Mammary epithelial cell (primary cell): ENCODE measurements at regions of chr9 and their contacts with region 1.

Region 1: DNA sequence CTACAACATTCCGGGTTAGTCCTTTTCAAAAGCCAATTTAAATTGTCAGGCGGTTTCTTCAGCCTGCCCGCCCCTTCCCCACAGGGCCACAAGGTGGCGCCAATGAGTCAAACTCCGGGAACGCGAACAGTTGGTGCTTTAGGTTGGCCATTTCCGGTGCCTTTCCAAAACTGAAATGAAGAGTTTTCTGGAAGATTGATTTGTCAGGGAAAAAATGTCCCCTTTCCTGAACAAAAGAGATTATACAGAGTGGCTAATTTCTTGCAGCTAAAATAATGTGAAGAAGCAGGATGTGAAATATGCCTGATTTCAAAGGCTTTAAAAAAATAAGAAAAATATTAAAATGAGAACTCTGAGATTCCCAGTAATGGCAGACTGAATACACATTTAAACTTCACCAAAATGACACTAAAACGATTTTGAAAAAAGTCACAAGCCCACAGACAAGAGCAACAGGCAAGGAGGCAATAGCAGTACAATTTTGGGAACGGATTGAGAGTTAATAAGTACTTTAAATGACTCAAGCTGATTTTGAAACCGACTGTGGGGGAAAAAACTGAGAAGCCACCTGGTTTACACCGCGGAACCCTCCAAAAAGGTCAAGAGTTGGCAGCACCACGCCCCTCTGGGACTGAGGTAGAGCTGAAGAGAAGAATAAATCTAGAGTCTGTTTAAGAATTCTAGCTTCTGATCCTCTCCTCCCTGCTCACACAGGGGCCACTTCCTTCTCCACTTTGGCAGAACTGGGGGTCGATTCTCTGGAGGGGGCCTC is 45.7 kb downstream of the SLC46A2 start:
- DNase-seq: peak; percentile 54
- H3K4me3 ChIP-seq: no peak overlapping the region
- H3K27ac ChIP-seq: no peak overlapping the region
- H3K4me1 ChIP-seq: peaks cover 4% of the 10 kb centered on the region
- H3K27me3 ChIP-seq: no peaks in the 10 kb centered on the region
- CTCF ChIP-seq: peak; percentile 96 to 99

Region 2: DNA sequence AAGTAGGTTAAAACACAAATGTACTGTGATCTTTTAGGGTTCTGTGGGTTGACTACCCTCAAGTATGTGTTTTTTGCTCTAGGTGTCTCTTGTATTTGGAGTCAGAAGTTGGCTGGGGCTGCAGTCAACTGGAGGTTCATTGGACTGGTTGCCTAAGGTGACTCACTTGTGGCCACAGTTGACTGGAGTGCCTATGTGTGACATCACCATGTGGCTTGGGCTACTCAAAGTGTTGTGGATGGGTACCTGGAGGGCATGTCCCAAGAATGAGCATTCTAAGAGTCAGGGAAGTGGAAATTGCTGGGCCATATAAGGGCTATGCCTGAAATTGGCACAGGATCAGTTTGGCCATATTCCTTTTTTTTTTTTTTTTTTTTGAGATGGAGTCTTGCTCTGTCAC is 67.0 kb before region 1 on chr9:
- CTCF ChIA-PET with region 1: no interaction called
- dilution Hi-C with region 1: no loop called
- in situ Hi-C with region 1: no loop called
- intact Hi-C with region 1: loop called (anchors 2 kb)
- DNase-seq: peak; percentile 66
- H3K4me3 ChIP-seq: no peak overlapping the region
- H3K27ac ChIP-seq: no peak overlapping the region
- H3K4me1 ChIP-seq: peaks cover 5% of the 10 kb centered on the region
- H3K27me3 ChIP-seq: no peaks in the 10 kb centered on the region
- CTCF ChIP-seq: no peak

Region 3: DNA sequence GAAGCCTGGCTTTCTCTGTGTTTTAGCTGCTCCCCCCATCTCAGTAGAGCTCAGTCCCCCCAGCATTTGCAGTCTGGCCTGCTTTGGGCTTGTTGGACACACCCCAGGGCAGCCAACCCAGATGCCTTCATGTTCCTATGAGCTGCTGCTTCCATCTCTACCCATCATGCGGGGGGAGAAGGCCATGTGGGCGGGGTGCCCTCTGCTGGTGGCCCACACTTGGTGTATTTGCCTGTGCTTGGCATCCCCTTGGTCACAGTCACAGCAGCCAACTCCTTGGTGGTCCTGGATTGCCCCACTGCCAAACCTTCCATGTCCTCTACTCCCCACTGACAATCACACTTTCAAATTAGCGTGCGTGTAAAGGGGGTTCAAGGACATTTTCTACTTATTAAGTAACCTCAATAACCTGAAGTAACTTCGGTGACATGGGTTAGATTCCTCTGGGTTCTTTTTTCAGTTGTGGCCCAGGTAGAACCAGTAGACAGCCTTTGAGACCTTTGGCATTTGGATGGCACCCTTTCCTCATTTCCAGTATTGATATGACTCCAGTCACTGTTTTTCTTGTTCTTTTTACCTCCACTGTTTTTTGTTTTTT is 51.6 kb before region 1 on chr9:
- CTCF ChIA-PET with region 1: no interaction called
- dilution Hi-C with region 1: no loop called
- in situ Hi-C with region 1: no loop called
- intact Hi-C with region 1: no loop called
- DNase-seq: peak; percentile 43
- H3K4me3 ChIP-seq: no peak overlapping the region
- H3K27ac ChIP-seq: no peak overlapping the region
- H3K4me1 ChIP-seq: no peaks in the 10 kb centered on the region
- H3K27me3 ChIP-seq: no peaks in the 10 kb centered on the region
- CTCF ChIP-seq: peak; percentile 83 to 90

Region 4: DNA sequence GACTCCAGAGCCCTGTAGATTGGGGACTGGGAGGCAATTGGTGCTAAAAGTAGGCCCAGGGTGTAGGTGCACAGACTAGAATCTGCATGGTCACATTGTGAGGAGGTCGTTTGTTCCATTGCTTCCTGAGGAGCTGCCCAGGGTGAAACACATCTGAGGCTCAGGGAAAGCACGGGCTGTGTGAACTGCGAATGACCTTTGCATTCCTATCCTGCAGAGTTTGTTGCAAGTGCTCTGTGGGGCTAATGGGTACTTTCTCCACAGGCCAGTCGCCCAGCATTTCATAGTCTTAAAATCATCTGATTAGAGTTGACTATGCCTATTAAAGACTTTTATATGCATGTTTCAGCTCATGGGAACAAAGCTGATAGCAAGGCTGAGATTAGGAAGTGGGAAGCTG is 60.1 kb after region 1 on chr9:
- CTCF ChIA-PET with region 1: interaction called, 5 read pairs
- dilution Hi-C with region 1: loop called (anchors 10 kb)
- in situ Hi-C with region 1: loop called in 1 of 2 experiments (anchors 5 kb)
- intact Hi-C with region 1: loop called (anchors 1 kb)
- DNase-seq: no peak
- H3K4me3 ChIP-seq: no peak overlapping the region
- H3K27ac ChIP-seq: no peak overlapping the region
- H3K4me1 ChIP-seq: no peaks in the 10 kb centered on the region
- H3K27me3 ChIP-seq: no peaks in the 10 kb centered on the region
- CTCF ChIP-seq: no peak